Ascending aorta (tissue), 2 donors: ENCODE measurements at regions of chr7 and their contacts with region 1.

Region 1: DNA sequence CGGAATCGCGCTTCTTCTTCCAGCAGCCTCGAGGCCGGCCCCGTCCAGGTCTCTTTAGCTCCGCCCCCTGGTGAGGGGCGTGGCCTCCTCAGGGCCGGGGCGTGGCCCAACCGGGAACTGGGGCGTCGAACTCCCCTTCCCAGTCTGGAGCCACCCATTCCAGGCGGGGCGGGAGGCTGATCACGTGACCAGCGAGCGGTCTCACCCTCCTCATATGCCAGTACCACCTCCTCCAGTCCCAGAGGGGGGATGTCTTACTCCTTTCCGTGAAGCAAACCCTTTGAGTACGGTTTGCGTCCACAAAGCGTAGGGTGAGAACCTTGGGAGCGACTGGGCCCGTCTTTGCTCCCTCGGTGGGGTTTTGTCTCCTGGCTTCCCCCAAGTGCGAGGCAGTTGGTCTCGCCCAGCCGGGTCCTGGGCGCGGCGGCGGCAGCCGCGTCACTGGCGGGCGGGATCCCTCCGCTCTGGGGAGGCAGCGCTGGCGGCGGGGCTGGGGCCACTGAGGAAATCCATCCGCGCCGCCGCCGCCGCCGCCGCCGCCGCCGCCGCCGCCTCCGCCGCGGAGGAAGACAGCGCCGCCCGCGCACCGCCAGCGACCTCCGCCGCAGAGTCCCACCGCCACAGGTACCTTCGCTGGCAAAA is at the start of gene GNB2:
- DNase-seq: peak; percentile 99
- H3K4me3 ChIP-seq: peak within 1 kb of the TSS; percentile 85 to 93
- H3K27ac ChIP-seq: peak within 1 kb of the TSS; percentile 96 to 99
- H3K4me1 ChIP-seq: peaks cover 3 to 7% of the 10 kb centered on the region in 2 donors
- H3K27me3 ChIP-seq: no peaks in the 10 kb centered on the region
- CTCF ChIP-seq: peak in 1 of 3 experiments; percentile 12
- total RNA-seq, gene GNB2: 500 TPM

Region 2: GRCh38 chr7:100418930-100419659 is 254.3 kb before region 1 on chr7:
- intact Hi-C with region 1: no loop called
- DNase-seq: no peak
- H3K4me3 ChIP-seq: no peak overlapping the region
- H3K27ac ChIP-seq: no peak overlapping the region
- H3K4me1 ChIP-seq: no peaks in the 10 kb centered on the region
- H3K27me3 ChIP-seq: no peaks in the 10 kb centered on the region
- CTCF ChIP-seq: no peak

Region 3: GRCh38 chr7:100428967-100429636 is 244.3 kb before region 1 on chr7:
- intact Hi-C with region 1: loop called (anchors 1 kb)
- DNase-seq: peak; percentile 100
- H3K4me3 ChIP-seq: peak overlapping the region; percentile 74 to 82
- H3K27ac ChIP-seq: peak overlapping the region; percentile 99 to 100
- H3K4me1 ChIP-seq: peaks cover 4 to 22% of the 10 kb centered on the region in 2 donors
- H3K27me3 ChIP-seq: no peaks in the 10 kb centered on the region
- CTCF ChIP-seq: peak in 2 of 3 experiments; percentile 7 to 49

Region 4: GRCh38 chr7:100469227-100470044 is 204.0 kb before region 1 on chr7:
- intact Hi-C with region 1: loop called (anchors 5 kb)
- DNase-seq: peak in 1 of 2 donors; percentile 90
- H3K4me3 ChIP-seq: no peak overlapping the region
- H3K27ac ChIP-seq: no peak overlapping the region
- H3K4me1 ChIP-seq: peaks cover 17 to 26% of the 10 kb centered on the region in 2 donors
- H3K27me3 ChIP-seq: no peaks in the 10 kb centered on the region
- CTCF ChIP-seq: peak; percentile 87 to 97 (median 95)

Region 5: DNA sequence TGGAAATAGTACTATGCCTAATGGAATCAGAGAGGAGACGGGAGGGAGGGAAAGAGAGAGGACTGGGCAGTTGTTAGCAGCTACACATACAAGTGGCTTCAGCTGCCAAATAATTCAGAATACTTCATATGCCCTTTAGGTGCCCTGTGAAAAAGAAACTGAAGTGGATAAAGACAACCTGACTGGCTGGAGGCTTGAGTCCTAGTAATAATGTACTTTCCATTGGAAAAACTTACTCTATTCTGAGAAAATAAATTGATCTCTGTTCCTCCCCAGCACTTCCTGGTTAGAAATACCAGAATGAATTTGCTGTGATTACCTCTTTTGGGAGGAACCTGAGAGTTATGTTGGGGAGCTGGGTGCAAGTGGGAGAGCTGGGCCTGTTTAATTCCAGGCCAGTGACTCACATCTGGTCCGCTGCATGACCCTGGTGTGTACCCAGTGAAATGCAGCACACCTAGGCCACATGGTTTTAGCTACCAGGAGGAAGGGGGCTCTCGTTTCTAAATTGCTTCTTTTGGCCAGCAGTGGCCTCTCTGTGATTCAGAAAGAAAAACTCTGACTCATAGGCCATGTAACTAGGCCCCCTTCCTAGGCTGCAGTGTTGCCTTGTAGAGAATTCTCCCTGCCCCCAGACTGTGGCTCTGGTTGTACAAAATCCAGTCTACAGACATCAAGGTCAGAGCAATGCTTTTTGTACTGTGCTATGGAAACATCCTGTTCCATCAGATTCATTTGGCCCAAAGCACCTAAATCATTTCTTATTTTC is 127.9 kb before region 1 on chr7:
- intact Hi-C with region 1: loop called (anchors 5 kb)
- DNase-seq: peak; percentile 59 to 91
- H3K4me3 ChIP-seq: peak overlapping the region; percentile 11 to 14
- H3K27ac ChIP-seq: peak overlapping the region; percentile 91 to 94
- H3K4me1 ChIP-seq: peaks cover 28 to 46% of the 10 kb centered on the region in 2 donors
- H3K27me3 ChIP-seq: no peaks in the 10 kb centered on the region
- CTCF ChIP-seq: peak in 1 of 3 experiments; percentile 3

Region 6: DNA sequence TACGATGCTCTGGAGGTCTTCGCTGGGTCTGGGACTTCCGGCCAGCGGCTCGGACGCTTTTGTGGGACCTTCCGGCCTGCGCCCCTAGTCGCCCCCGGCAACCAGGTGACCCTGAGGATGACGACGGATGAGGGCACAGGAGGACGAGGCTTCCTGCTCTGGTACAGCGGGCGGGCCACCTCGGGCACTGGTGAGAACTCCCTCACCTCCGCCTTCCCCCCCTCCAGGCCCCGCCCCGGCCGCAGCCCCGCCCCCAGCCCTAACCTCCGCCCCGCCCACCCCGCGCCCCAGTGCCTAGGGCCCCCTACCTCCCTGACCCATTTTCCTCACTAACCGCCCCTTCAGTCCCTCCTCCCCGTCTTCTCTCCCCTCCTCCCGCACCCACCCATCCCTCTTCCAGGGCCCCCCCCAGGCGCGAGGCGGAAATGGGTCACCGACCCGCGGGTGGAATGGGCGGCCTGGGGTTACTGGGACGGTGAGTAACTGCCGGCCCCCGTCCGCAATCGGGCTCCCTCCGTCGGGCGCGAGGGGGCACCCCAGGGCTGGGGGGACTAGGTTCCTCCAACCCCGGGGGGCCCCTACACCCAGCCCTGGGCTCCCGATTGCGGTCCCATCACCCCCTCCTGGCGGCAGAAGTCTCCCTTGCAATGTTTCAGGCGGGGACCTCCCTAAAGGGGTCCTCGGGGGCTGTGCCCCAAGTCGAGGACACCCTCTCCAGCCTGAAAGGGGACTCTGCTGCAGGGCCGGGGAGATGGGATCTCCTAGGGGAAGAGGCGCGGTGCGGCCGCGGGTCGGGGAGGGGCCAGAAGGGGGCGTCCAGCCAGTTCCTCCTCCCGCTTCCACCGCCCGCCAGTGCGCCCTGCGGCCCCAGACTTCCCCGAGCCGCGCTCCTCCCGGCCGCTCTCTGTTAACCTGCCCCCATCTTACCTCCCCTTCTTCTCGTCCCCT is 69.1 kb before region 1 on chr7:
- intact Hi-C with region 1: loop called (anchors 1 kb)
- DNase-seq: peak in 1 of 2 donors; percentile 89
- H3K4me3 ChIP-seq: peak overlapping the region; percentile 89 to 91
- H3K27ac ChIP-seq: peak overlapping the region; percentile 87 to 88
- H3K4me1 ChIP-seq: peaks cover 0 to 24% of the 10 kb centered on the region in 2 donors
- H3K27me3 ChIP-seq: no peaks in the 10 kb centered on the region
- CTCF ChIP-seq: peak; percentile 39 to 60 (median 47)

Region 7: DNA sequence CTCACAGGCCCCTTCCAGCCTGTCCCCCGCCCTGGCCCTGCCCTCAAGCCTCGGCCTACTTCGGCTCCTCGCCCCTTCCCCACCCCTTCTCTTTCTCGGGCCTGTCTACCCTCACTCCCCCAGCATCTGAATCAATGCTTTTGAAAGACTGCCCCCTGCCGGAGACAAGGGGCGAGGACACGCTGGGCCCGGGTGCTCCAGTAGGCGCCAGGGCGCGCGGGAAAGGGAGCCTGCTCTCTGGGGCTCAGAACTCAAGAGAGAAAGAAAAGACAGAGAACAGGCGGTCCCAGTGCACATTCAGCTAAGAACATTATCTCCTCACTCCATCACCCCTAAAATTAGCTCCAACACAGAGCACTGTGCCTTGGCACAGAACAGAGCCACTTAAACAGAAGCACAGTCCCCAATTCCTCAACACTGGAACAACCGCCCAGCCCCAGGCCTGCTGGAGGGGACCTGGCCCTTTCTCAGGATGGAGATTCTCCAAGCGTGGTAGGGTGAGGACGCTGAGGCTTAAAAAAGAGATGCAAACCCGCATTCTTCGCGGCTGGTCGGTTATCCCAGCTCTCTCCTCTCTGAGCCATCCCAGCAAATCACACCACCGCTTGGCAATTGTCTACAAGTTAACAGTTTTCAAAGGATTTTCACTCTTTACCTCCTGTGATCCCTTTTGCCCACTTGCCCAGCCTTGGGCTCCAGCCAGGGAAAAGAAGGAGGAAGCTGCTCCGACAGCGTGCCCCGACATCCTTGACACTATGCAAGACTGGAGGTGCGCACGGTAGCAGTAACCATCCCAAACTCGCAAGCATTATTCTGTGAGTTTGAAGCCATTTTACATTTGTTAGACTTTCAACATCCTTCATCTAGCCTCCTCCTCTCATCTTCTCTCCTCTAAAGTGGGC is 18.5 kb after region 1 on chr7:
- intact Hi-C with region 1: loop called (anchors 1 kb)
- DNase-seq: peak in 1 of 2 donors; percentile 86
- H3K4me3 ChIP-seq: peak overlapping the region; percentile 92 to 96
- H3K27ac ChIP-seq: peak overlapping the region in 1 of 2 donors; percentile 20
- H3K4me1 ChIP-seq: peaks cover 10 to 30% of the 10 kb centered on the region in 2 donors
- H3K27me3 ChIP-seq: no peaks in the 10 kb centered on the region
- CTCF ChIP-seq: peak; percentile 85 to 97 (median 92)

Region 8: DNA sequence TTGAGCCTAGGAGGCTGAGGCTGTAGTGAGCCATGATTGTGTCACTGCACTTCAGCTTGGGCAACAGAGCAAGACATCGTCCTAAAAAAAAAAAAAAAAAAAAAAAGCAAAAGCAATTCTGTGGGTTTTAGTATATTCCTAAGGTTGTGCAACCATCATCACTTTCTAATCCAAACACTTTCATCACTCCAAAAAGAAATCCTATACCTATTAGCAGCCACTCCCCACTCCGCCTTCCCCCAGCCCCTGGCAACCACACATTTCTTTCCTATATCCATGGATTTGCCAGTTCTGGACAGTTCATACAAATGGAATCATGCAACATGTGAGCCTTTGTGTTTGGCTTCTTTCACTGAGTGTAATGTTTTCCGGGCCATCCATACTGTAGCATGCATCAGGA is 80.3 kb after region 1 on chr7:
- intact Hi-C with region 1: no loop called
- DNase-seq: no peak
- H3K4me3 ChIP-seq: no peak overlapping the region
- H3K27ac ChIP-seq: no peak overlapping the region
- H3K4me1 ChIP-seq: no peaks in the 10 kb centered on the region
- H3K27me3 ChIP-seq: no peaks in the 10 kb centered on the region
- CTCF ChIP-seq: no peak